ENCODE measurements at regions of chr2 and their contacts with region 1.

Region 1: GRCh38 chr2:118882709-118883210 is 35.3 kb upstream of the EN1 start:
- DNase-seq: peak; percentile 59
- H3K4me3 Mint-ChIP-seq: peak overlapping the region; percentile 29
- H3K27ac Mint-ChIP-seq: no peak overlapping the region
- H3K4me1 Mint-ChIP-seq: no peaks in the 10 kb centered on the region
- H3K27me3 Mint-ChIP-seq: peaks cover 25% of the 10 kb centered on the region

Region 2: GRCh38 chr2:119174216-119175037 is 291.7 kb after region 1 on chr2:
- CTCF ChIA-PET with region 1: interaction called, 31 read pairs
- POLR2A ChIA-PET with region 1: no interaction called
- intact Hi-C with region 1: no loop called
- DNase-seq: peak; percentile 54
- H3K4me3 Mint-ChIP-seq: no peak overlapping the region
- H3K27ac Mint-ChIP-seq: no peak overlapping the region
- H3K4me1 Mint-ChIP-seq: no peaks in the 10 kb centered on the region
- H3K27me3 Mint-ChIP-seq: no peaks in the 10 kb centered on the region

Region 3: GRCh38 chr2:119290859-119291587 is 408.3 kb after region 1 on chr2:
- CTCF ChIA-PET with region 1: interaction called, 13 read pairs
- POLR2A ChIA-PET with region 1: no interaction called
- intact Hi-C with region 1: loop called (anchors 1 kb)
- DNase-seq: peak; percentile 75
- H3K4me3 Mint-ChIP-seq: no peak overlapping the region
- H3K27ac Mint-ChIP-seq: no peak overlapping the region
- H3K4me1 Mint-ChIP-seq: no peaks in the 10 kb centered on the region
- H3K27me3 Mint-ChIP-seq: no peaks in the 10 kb centered on the region